CD4-positive, alpha-beta memory T cell (primary cell): ENCODE measurements at regions of chr14 and their contacts with region 1.

Region 1: GRCh38 chr14:22986508-22987054 is 4.2 kb upstream of the AJUBA start:
- DNase-seq: peak; percentile 80 to 86 (median 81)
- H3K4me3 ChIP-seq: no peak overlapping the region
- H3K4me3 Mint-ChIP-seq: no peak overlapping the region
- H3K27ac ChIP-seq: no peak overlapping the region
- H3K27ac Mint-ChIP-seq: peak overlapping the region in 1 of 7 donors; percentile 41
- H3K4me1 ChIP-seq: peaks cover 8% of the 10 kb centered on the region
- H3K4me1 Mint-ChIP-seq: peaks cover 0 to 4% (median 0%) of the 10 kb centered on the region in 4 donors
- H3K27me3 ChIP-seq: no peaks in the 10 kb centered on the region
- H3K27me3 Mint-ChIP-seq: no peaks in the 10 kb centered on the region

Region 2: GRCh38 chr14:22822571-22823098 is 163.9 kb before region 1 on chr14:
- CTCF ChIA-PET with region 1: interaction called, 20 read pairs
- POLR2A ChIA-PET with region 1: interaction called, 3 read pairs
- intact Hi-C with region 1: loop called (anchors 1 kb)
- DNase-seq: peak; percentile 63 to 70 (median 66)
- H3K4me3 ChIP-seq: peak overlapping the region in 1 of 2 donors; percentile 27
- H3K4me3 Mint-ChIP-seq: peak overlapping the region; percentile 20 to 77 (median 66)
- H3K27ac ChIP-seq: no peak overlapping the region
- H3K27ac Mint-ChIP-seq: peak overlapping the region in 2 of 7 donors; percentile 19 to 43
- H3K4me1 ChIP-seq: peaks cover 7% of the 10 kb centered on the region
- H3K4me1 Mint-ChIP-seq: peaks cover 6 to 22% (median 12%) of the 10 kb centered on the region in 4 donors
- H3K27me3 ChIP-seq: no peaks in the 10 kb centered on the region
- H3K27me3 Mint-ChIP-seq: peaks cover 6 to 16% of the 10 kb centered on the region in 2 donors

Region 3: GRCh38 chr14:22900081-22900799 is 86.3 kb before region 1 on chr14:
- CTCF ChIA-PET with region 1: no interaction called
- POLR2A ChIA-PET with region 1: no interaction called
- intact Hi-C with region 1: no loop called
- DNase-seq: peak; percentile 66 to 72 (median 67)
- H3K4me3 ChIP-seq: no peak overlapping the region
- H3K4me3 Mint-ChIP-seq: no peak overlapping the region
- H3K27ac ChIP-seq: no peak overlapping the region
- H3K27ac Mint-ChIP-seq: peak overlapping the region; percentile 12 to 65 (median 54)
- H3K4me1 ChIP-seq: peaks cover 4% of the 10 kb centered on the region
- H3K4me1 Mint-ChIP-seq: peaks cover 5 to 15% (median 5%) of the 10 kb centered on the region in 4 donors
- H3K27me3 ChIP-seq: no peaks in the 10 kb centered on the region
- H3K27me3 Mint-ChIP-seq: no peaks in the 10 kb centered on the region

Region 4: DNA sequence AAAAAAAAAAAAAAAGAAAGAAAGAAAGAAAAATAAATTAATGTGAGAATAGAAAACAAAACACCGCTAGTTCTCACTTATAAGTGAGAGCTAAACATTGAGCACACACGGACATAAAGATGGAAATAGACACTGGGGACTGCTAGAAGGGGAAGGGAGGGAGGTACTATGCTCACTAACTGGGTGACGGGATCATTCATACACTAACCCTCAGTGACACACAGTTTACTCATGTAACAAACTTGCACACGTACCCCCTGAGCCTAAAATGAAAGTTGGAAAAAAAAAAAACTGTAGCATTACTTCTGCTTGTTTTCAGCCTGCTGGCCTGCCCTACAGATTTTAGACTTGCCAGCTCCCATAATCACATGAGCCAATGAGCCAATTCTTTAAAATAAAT is 46.9 kb before region 1 on chr14:
- CTCF ChIA-PET with region 1: interaction called, 5 read pairs
- POLR2A ChIA-PET with region 1: no interaction called
- intact Hi-C with region 1: loop called (anchors 1 kb)
- DNase-seq: no peak
- H3K4me3 ChIP-seq: no peak overlapping the region
- H3K4me3 Mint-ChIP-seq: no peak overlapping the region
- H3K27ac ChIP-seq: no peak overlapping the region
- H3K27ac Mint-ChIP-seq: peak overlapping the region in 1 of 7 donors; percentile 1
- H3K4me1 ChIP-seq: no peaks in the 10 kb centered on the region
- H3K4me1 Mint-ChIP-seq: peaks cover 0 to 6% (median under 1%) of the 10 kb centered on the region in 4 donors
- H3K27me3 ChIP-seq: no peaks in the 10 kb centered on the region
- H3K27me3 Mint-ChIP-seq: no peaks in the 10 kb centered on the region

Region 5: DNA sequence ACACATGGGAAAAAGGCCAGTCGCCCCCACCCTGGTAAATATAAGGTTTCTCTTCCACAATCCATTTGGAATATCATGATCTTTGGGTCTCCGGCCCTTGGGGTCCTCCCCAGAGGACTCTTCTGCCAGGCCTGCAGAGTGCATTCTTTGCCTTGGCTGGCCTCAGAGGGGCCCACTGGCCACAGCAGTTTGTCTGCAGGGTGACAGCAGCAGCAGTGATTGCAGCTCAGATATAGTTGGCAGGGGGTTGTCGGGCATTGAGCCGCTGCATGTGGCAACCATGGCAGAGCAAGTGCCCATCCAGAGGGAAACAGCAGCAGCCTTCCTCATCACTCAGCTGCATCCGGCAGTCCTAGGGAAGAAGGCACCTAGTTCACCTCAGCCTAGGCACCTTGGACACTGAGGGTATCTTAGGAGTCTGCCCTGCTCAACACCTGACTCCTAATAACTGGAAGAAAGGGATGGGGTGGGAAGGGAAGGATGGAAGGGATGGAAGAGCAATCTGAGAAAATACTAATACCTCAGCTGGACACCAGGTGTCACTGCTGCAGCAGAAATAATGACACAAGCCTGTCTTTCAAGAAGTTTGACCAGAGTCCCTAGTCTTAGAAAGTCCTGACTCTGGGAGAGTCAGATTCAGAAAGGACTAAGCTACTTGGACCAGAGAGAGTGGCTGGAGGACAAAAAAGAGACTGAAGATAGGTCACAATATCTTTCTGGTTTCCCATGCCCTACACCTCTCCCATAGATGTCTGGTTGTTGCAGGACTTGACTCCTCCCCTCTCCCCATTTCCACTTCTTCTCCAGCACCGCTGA is 13.2 kb before region 1 on chr14:
- CTCF ChIA-PET with region 1: interaction called, 395 read pairs
- POLR2A ChIA-PET with region 1: interaction called, 13 read pairs
- intact Hi-C with region 1: loop called (anchors 1 kb)
- DNase-seq: peak in 4 of 5 donors; percentile 32 to 46 (median 38)
- H3K4me3 ChIP-seq: no peak overlapping the region
- H3K4me3 Mint-ChIP-seq: no peak overlapping the region
- H3K27ac ChIP-seq: no peak overlapping the region
- H3K27ac Mint-ChIP-seq: no peak overlapping the region
- H3K4me1 ChIP-seq: no peaks in the 10 kb centered on the region
- H3K4me1 Mint-ChIP-seq: no peaks in the 10 kb centered on the region
- H3K27me3 ChIP-seq: no peaks in the 10 kb centered on the region
- H3K27me3 Mint-ChIP-seq: peaks cover 0 to 3% of the 10 kb centered on the region in 2 donors

Region 6: DNA sequence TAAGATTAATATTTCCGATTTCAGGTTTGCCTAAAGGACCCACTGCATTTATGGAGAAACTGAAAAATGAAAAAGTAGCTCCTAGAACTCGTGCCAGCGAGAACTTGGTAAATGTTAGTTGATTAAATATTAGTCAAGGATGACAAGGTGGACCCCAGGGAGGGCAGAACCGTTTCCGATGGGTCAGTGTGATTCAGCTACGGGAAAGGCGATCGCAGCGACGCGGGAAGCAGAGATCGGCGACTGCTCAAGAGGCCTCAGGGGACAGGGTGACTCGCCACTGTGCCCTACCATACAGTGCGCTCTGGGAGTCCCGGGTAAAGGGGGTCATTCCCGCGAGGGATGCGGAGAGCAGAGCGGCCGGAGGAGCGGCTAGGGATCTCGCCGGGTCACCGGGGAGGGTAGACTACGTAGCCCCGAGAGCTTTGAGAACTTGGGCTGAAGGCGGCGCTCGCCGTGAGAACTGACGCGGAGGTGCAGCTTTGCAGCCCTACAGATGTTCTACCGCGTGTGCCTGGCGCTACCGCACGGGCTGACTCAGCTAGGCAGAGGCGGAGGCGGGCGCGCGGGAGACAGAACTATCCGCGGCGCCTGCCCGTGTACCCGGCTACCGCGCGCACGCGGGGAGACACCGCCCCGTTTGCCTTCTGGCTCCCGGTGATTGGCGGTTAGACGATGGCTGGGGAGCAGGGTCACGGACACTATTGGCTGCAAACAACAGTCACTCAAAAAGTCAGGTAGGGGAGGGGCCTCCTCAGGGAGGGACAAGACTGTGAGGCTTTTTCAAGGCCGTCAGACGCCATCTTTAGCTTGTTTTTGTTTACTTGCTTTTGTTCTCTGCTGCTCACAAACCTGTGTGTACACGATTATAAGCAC is 20.2 kb after region 1 on chr14:
- CTCF ChIA-PET with region 1: interaction called, 47 read pairs
- POLR2A ChIA-PET with region 1: interaction called, 30 read pairs
- intact Hi-C with region 1: loop called (anchors 1 kb)
- DNase-seq: peak; percentile 99
- H3K4me3 ChIP-seq: peak overlapping the region; percentile 96
- H3K4me3 Mint-ChIP-seq: peak overlapping the region; percentile 94 to 99 (median 97)
- H3K27ac ChIP-seq: peak overlapping the region; percentile 80
- H3K27ac Mint-ChIP-seq: peak overlapping the region; percentile 90 to 99 (median 97)
- H3K4me1 ChIP-seq: peaks cover 37% of the 10 kb centered on the region
- H3K4me1 Mint-ChIP-seq: peaks cover 17 to 52% (median 34%) of the 10 kb centered on the region in 4 donors
- H3K27me3 ChIP-seq: no peaks in the 10 kb centered on the region
- H3K27me3 Mint-ChIP-seq: no peaks in the 10 kb centered on the region

Region 7: GRCh38 chr14:23034483-23035302 is 48.1 kb after region 1 on chr14 and contains the start of gene PSMB5:
- CTCF ChIA-PET with region 1: interaction called, 17 read pairs
- POLR2A ChIA-PET with region 1: interaction called, 5 read pairs
- intact Hi-C with region 1: loop called (anchors 1 kb)
- DNase-seq: peak; percentile 93 to 96 (median 93)
- H3K4me3 ChIP-seq: peak within 1 kb of the TSS; percentile 66 to 90
- H3K4me3 Mint-ChIP-seq: peak within 1 kb of the TSS; percentile 87 to 98 (median 93)
- H3K27ac ChIP-seq: peak within 1 kb of the TSS; percentile 89
- H3K27ac Mint-ChIP-seq: peak within 1 kb of the TSS; percentile 89 to 99 (median 98)
- H3K4me1 ChIP-seq: peaks cover 19% of the 10 kb centered on the region
- H3K4me1 Mint-ChIP-seq: peaks cover 17 to 43% (median 31%) of the 10 kb centered on the region in 4 donors
- H3K27me3 ChIP-seq: no peaks in the 10 kb centered on the region
- H3K27me3 Mint-ChIP-seq: no peaks in the 10 kb centered on the region
- total RNA-seq, gene PSMB5: 31.4 to 33.6 TPM

Region 8: GRCh38 chr14:23068476-23069412 is 82.2 kb after region 1 on chr14:
- CTCF ChIA-PET with region 1: interaction called, 1,070 read pairs
- POLR2A ChIA-PET with region 1: interaction called, 82 read pairs
- intact Hi-C with region 1: no loop called
- DNase-seq: peak; percentile 77 to 81 (median 78)
- H3K4me3 ChIP-seq: no peak overlapping the region
- H3K4me3 Mint-ChIP-seq: peak overlapping the region in 7 of 8 donors; percentile 34 to 74 (median 61)
- H3K27ac ChIP-seq: no peak overlapping the region
- H3K27ac Mint-ChIP-seq: peak overlapping the region; percentile 34 to 93 (median 87)
- H3K4me1 ChIP-seq: peaks cover 28% of the 10 kb centered on the region
- H3K4me1 Mint-ChIP-seq: peaks cover 19 to 41% (median 32%) of the 10 kb centered on the region in 4 donors
- H3K27me3 ChIP-seq: no peaks in the 10 kb centered on the region
- H3K27me3 Mint-ChIP-seq: no peaks in the 10 kb centered on the region

Region 9: GRCh38 chr14:23174276-23175184 is 187.9 kb after region 1 on chr14:
- CTCF ChIA-PET with region 1: no interaction called
- POLR2A ChIA-PET with region 1: no interaction called
- intact Hi-C with region 1: no loop called
- DNase-seq: no peak
- H3K4me3 ChIP-seq: no peak overlapping the region
- H3K4me3 Mint-ChIP-seq: no peak overlapping the region
- H3K27ac ChIP-seq: no peak overlapping the region
- H3K27ac Mint-ChIP-seq: no peak overlapping the region
- H3K4me1 ChIP-seq: no peaks in the 10 kb centered on the region
- H3K4me1 Mint-ChIP-seq: peaks cover 0 to 20% (median 9%) of the 10 kb centered on the region in 4 donors
- H3K27me3 ChIP-seq: no peaks in the 10 kb centered on the region
- H3K27me3 Mint-ChIP-seq: peaks cover 8 to 23% of the 10 kb centered on the region in 2 donors

Region 10: DNA sequence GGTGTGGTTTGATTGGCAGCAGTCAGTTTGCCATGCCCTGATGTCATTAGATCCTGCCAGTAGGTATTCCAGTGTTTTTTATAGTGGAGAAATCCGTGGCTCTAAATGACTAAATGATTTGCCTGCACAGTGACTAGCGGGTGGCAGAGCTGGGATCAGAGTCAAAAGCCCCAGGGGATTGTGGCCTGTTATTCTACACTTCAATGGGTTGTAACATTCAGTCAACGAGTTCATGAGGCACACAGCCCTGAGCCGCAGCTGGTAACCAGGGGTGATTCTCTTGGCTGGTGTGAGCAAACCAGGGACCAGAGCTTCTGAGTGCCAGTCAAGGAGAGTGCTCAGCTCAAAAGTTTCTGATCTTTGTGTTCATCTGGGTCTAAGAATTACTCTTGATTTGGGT is 419.7 kb after region 1 on chr14:
- CTCF ChIA-PET with region 1: no interaction called
- POLR2A ChIA-PET with region 1: no interaction called
- intact Hi-C with region 1: no loop called
- DNase-seq: no peak
- H3K4me3 ChIP-seq: no peak overlapping the region
- H3K4me3 Mint-ChIP-seq: no peak overlapping the region
- H3K27ac ChIP-seq: no peak overlapping the region
- H3K27ac Mint-ChIP-seq: no peak overlapping the region
- H3K4me1 ChIP-seq: no peaks in the 10 kb centered on the region
- H3K4me1 Mint-ChIP-seq: no peaks in the 10 kb centered on the region
- H3K27me3 ChIP-seq: no peaks in the 10 kb centered on the region
- H3K27me3 Mint-ChIP-seq: peaks cover 6 to 27% of the 10 kb centered on the region in 2 donors